Activated T-helper 1 cell treated with anti-CD3 and anti-CD28 coated beads, Interleukin-12 subunit alpha, Interleukin-12 subunit beta, Interleukin-2, Interleukin-4 antibody, amounts not matched to agents 30 ng/mL and 10 ng/mL and 1 ng/mL, durations not matched to agents 14 hours and 24 hours and 36 hours (primary cell): ENCODE measurements at regions of chr11 and their contacts with region 1.

Region 1: GRCh38 chr11:62645956-62646824 is at the start of gene GANAB:
- DNase-seq: peak; percentile 97
- H3K4me3 Mint-ChIP-seq: peak within 1 kb of the TSS; percentile 100
- H3K27ac Mint-ChIP-seq: peak within 1 kb of the TSS; percentile 98
- H3K4me1 Mint-ChIP-seq: peaks cover 25% of the 10 kb centered on the region
- H3K27me3 Mint-ChIP-seq: no peaks in the 10 kb centered on the region
- total RNA-seq, gene GANAB: 238 and 255 TPM in 2 replicates

Region 2: GRCh38 chr11:62573592-62574362 is 72.4 kb before region 1 on chr11 and contains the start of gene EEF1G:
- intact Hi-C with region 1: loop called (anchors 1 kb)
- DNase-seq: peak; percentile 99
- H3K4me3 Mint-ChIP-seq: peak within 1 kb of the TSS; percentile 98
- H3K27ac Mint-ChIP-seq: peak within 1 kb of the TSS; percentile 92
- H3K4me1 Mint-ChIP-seq: peaks cover 37% of the 10 kb centered on the region
- H3K27me3 Mint-ChIP-seq: no peaks in the 10 kb centered on the region
- total RNA-seq, gene EEF1G: 1,154 and 1,169 TPM in 2 replicates

Region 3: DNA sequence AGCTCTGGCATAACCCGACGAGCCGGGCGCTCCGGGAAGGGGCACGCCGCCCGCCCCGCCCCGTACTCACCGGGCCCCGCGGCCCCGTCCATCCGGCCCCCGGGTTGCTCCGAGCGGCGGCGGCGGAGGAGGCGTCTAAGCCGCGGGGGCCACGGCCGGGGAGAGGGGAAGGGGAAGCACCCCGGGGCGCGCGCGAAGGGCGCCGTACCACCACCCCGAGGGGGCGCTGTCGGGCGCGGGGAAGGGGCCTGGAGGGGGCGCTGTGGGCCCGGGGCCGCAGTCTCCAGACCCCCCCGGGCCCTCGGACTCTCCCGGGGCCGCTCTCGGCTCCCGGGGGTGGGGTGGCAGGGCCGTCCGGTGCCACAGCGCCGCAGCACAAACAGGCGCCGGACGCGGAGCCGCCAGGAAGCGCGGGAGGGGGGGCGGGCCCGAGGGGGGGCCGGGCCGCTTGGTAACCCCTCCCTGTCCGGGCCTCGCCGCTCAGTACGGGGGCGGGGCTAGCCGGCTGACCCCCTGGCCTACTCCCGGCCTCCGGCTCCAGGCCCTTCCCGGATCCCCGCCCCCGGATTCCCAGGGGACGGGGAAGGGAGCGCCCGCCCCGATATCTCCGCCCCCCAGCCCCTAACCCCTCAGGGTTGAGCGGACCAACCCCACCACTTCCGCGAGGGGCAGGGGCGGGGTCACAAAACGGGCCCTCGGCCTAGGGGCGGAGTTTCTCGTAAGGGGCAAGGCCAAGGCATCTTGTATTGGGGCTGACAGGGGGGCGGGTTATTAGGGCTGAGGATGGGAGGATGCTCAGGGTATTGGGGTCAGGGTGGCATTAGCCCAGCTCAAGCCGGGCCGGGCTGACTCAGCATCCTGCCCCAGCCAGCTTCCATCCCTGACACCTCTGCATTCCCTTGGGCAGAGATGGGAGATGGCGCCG is 33.6 kb before region 1 on chr11 and contains the starts of genes EML3 and ROM1:
- intact Hi-C with region 1: loop called (anchors 1 kb)
- DNase-seq: peak; percentile 85
- H3K4me3 Mint-ChIP-seq: peak within 1 kb of the TSS; percentile 96
- H3K27ac Mint-ChIP-seq: peak within 1 kb of the TSS; percentile 97
- H3K4me1 Mint-ChIP-seq: peaks cover 32% of the 10 kb centered on the region
- H3K27me3 Mint-ChIP-seq: no peaks in the 10 kb centered on the region
- total RNA-seq, gene EML3: 164 and 167 TPM in 2 replicates
- total RNA-seq, gene ROM1: 2.5 and 3.2 TPM in 2 replicates

Region 4: GRCh38 chr11:62665075-62665598 is 18.9 kb after region 1 on chr11 and contains the starts of genes C11orf98 and CSKMT:
- intact Hi-C with region 1: loop called (anchors 1 kb)
- DNase-seq: peak; percentile 97
- H3K4me3 Mint-ChIP-seq: peak within 1 kb of the TSS; percentile 98
- H3K27ac Mint-ChIP-seq: peak within 1 kb of the TSS; percentile 81
- H3K4me1 Mint-ChIP-seq: peaks cover 33% of the 10 kb centered on the region
- H3K27me3 Mint-ChIP-seq: no peaks in the 10 kb centered on the region
- total RNA-seq, gene C11orf98: 146 and 151 TPM in 2 replicates
- total RNA-seq, gene CSKMT: 65.0 and 69.4 TPM in 2 replicates

Region 5: DNA sequence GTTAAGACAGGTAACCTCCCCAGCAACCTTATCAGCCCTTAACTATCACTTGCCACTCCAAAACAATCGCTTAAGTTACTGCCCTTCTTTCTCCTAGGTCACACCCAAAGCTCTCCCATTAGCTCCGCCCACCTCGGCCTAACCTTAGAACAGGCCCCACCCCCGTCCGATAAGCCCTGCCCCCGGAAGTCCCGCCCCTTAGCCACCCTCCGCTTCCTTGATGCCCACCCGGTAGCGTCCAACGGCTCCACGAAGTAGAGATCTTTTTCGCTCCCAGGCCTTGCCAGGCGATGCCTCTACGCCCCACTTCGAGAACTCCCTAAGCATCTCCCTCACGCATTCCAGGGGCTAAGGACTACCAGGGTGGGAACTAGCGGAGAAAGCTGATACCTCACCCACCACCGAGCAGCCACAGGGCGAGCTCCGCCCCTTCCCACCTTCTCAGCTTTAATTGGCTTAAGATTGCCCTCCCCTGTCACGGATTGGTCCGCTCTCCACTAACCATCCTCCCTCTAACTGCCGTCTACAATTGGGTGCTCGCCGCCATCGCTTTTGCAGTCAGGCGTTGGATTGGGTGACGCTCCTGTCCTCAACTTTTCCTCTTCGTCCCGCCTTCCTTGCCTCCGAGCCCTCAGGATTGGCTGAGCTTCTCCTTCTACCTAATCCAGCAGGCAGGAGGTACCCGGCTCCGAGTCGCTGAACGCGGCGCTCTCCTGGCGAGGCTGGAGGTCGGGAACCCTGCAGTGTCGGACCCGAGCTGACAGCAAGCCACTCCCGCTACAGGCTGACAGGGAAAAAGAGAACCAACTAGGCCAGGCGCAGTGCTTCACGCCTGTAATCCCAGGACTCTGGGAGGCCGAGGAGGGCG is 107.8 kb after region 1 on chr11 and contains the start of gene ZBTB3:
- intact Hi-C with region 1: loop called (anchors 1 kb)
- DNase-seq: peak; percentile 95
- H3K4me3 Mint-ChIP-seq: peak within 1 kb of the TSS; percentile 89
- H3K27ac Mint-ChIP-seq: peak within 1 kb of the TSS; percentile 91
- H3K4me1 Mint-ChIP-seq: peaks cover 12% of the 10 kb centered on the region
- H3K27me3 Mint-ChIP-seq: no peaks in the 10 kb centered on the region
- total RNA-seq, gene ZBTB3: 8.7 and 9.1 TPM in 2 replicates